PC-9 (cell line): ENCODE measurements at regions of chr12 and their contacts with region 1.

Region 1: GRCh38 chr12:288687-289086 is 26.1 kb upstream of the SLC6A13 start:
- DNase-seq: no peak
- H3K4me3 ChIP-seq: no peak overlapping the region
- H3K27ac ChIP-seq: no peak overlapping the region
- H3K4me1 ChIP-seq: no peaks in the 10 kb centered on the region
- H3K27me3 ChIP-seq: no peaks in the 10 kb centered on the region
- CTCF ChIP-seq: no peak

Region 2: DNA sequence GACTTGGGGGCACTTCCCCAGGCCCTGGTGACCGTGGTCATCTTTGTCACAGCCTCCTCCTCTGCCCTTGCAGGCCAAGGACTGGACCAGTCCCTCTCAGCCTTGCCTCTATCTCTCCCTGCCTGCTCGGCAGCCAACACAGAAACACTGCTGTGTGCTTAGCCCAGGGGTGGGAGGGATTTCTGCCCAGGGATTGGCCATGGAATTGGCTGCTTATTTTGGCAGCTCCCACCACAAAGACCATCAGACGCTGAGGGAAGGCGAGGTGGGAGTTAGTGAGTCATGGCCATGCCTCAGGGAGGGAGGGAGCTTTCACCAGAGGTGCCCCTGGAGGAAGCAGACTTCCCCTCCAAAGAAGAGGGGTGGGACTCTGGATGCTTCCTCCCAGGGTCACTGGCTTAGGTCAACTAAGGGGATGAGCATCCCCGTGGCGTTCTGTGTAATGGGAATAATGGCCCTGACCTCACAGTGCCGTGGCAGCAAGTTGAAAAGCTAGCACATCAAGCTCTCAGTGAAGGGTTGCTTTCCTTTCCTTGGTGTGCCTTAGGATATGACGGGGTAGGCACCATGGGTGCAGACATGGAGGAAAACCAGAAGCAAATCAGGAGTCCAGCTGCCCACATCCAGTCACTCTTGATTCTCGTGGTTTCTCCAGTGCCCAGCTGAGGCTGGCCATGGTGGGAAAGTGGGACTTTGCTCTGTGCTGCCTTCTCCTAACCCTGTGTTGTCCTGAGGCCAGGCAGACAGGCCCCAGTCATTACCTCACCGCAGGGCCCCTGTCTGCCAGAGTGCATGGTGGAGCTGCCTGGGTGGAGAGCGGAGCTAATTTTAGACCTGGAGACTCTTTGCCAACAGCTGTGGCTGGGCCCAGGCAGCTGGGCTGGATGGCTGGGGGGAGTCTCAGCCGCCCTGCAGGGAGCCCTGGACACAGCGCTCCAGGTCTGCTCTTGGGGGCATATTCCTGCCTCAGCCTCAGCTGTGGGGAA is 192.4 kb after region 1 on chr12:
- CTCF ChIA-PET with region 1: interaction called, 18 read pairs
- POLR2A ChIA-PET with region 1: no interaction called
- intact Hi-C with region 1: no loop called
- DNase-seq: no peak
- H3K4me3 ChIP-seq: no peak overlapping the region
- H3K27ac ChIP-seq: no peak overlapping the region
- H3K4me1 ChIP-seq: no peaks in the 10 kb centered on the region
- H3K27me3 ChIP-seq: peaks cover 43% of the 10 kb centered on the region
- CTCF ChIP-seq: no peak

Region 3: GRCh38 chr12:823028-823698 is 534.5 kb after region 1 on chr12:
- CTCF ChIA-PET with region 1: no interaction called
- POLR2A ChIA-PET with region 1: no interaction called
- intact Hi-C with region 1: no loop called
- DNase-seq: no peak
- H3K4me3 ChIP-seq: no peak overlapping the region
- H3K27ac ChIP-seq: no peak overlapping the region
- H3K4me1 ChIP-seq: 0 out of 2 replicates have a peak, but pooled peaks cover 6% of the 10 kb centered on the region
- H3K27me3 ChIP-seq: no peaks in the 10 kb centered on the region
- CTCF ChIP-seq: no peak

Region 4: GRCh38 chr12:1108276-1108675 is 819.6 kb after region 1 on chr12:
- CTCF ChIA-PET with region 1: no interaction called
- POLR2A ChIA-PET with region 1: no interaction called
- intact Hi-C with region 1: no loop called
- DNase-seq: no peak
- H3K4me3 ChIP-seq: no peak overlapping the region
- H3K27ac ChIP-seq: no peak overlapping the region
- H3K4me1 ChIP-seq: 0 out of 2 replicates have a peak, but pooled peaks cover 8% of the 10 kb centered on the region
- H3K27me3 ChIP-seq: no peaks in the 10 kb centered on the region
- CTCF ChIP-seq: no peak